OCI-LY7 (cell line): ENCODE measurements at regions of chr1 and their contacts with region 1.

Region 1: GRCh38 chr1:160997323-160998038 is 23.5 kb downstream of the F11R start:
- DNase-seq: peak; percentile 70
- H3K4me3 ChIP-seq: no peak overlapping the region
- H3K27ac ChIP-seq: no peak overlapping the region
- H3K4me1 ChIP-seq: peaks cover 11% of the 10 kb centered on the region
- CTCF ChIP-seq: peak; percentile 84

Region 2: GRCh38 chr1:160112357-160112756 is 885.1 kb before region 1 on chr1:
- CTCF ChIA-PET with region 1: interaction called, 14 read pairs
- POLR2A ChIA-PET with region 1: no interaction called
- intact Hi-C with region 1: no loop called
- DNase-seq: no peak
- H3K4me3 ChIP-seq: no peak overlapping the region
- H3K27ac ChIP-seq: no peak overlapping the region
- H3K4me1 ChIP-seq: peaks cover 4% of the 10 kb centered on the region
- CTCF ChIP-seq: no peak

Region 3: GRCh38 chr1:161038523-161039153 is 41.2 kb after region 1 on chr1 and contains the start of gene TSTD1:
- CTCF ChIA-PET with region 1: interaction called, 4 read pairs
- POLR2A ChIA-PET with region 1: no interaction called
- intact Hi-C with region 1: loop called (anchors 2 kb)
- DNase-seq: peak; percentile 87
- H3K4me3 ChIP-seq: peak within 1 kb of the TSS; percentile 81
- H3K27ac ChIP-seq: peak within 1 kb of the TSS; percentile 57
- H3K4me1 ChIP-seq: peaks cover 66% of the 10 kb centered on the region
- CTCF ChIP-seq: peak; percentile 35; the same call in 1 of the 2 replicates
- total RNA-seq, gene TSTD1: 164 and 206 TPM in 2 replicates

Region 4: GRCh38 chr1:161098210-161099068 is 101.0 kb after region 1 on chr1 and contains the start of gene KLHDC9:
- CTCF ChIA-PET with region 1: interaction called, 7 read pairs
- POLR2A ChIA-PET with region 1: no interaction called
- intact Hi-C with region 1: loop called (anchors 1 kb)
- DNase-seq: peak; percentile 86
- H3K4me3 ChIP-seq: peak within 1 kb of the TSS; percentile 65
- H3K27ac ChIP-seq: peak within 1 kb of the TSS; percentile 50
- H3K4me1 ChIP-seq: peaks cover 29% of the 10 kb centered on the region
- CTCF ChIP-seq: no peak
- total RNA-seq, gene KLHDC9: 0.95 and 2.7 TPM in 2 replicates

Region 5: DNA sequence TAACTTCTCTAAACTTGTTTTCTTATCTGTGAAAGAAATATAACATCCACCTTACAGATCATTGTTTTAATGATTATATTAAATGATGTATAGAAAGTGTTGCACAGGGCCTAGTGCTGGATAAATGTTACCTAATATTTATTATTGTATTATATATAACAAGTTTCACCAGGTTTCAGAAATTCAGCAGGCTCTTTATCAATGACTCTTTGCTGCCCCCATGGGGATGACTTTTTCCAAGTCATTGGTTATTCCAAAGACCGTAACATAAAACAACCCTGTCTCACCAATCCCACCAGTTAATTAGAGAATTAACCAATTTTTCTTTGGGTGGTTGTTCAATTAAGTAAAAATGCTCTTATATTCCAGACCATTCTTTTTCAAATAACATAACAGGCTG is 142.3 kb after region 1 on chr1:
- CTCF ChIA-PET with region 1: interaction called, 3 read pairs
- POLR2A ChIA-PET with region 1: no interaction called
- intact Hi-C with region 1: loop called (anchors 2 kb)
- DNase-seq: peak; percentile 52
- H3K4me3 ChIP-seq: no peak overlapping the region
- H3K27ac ChIP-seq: no peak overlapping the region
- H3K4me1 ChIP-seq: peaks cover 14% of the 10 kb centered on the region
- CTCF ChIP-seq: peak; percentile 85

Region 6: DNA sequence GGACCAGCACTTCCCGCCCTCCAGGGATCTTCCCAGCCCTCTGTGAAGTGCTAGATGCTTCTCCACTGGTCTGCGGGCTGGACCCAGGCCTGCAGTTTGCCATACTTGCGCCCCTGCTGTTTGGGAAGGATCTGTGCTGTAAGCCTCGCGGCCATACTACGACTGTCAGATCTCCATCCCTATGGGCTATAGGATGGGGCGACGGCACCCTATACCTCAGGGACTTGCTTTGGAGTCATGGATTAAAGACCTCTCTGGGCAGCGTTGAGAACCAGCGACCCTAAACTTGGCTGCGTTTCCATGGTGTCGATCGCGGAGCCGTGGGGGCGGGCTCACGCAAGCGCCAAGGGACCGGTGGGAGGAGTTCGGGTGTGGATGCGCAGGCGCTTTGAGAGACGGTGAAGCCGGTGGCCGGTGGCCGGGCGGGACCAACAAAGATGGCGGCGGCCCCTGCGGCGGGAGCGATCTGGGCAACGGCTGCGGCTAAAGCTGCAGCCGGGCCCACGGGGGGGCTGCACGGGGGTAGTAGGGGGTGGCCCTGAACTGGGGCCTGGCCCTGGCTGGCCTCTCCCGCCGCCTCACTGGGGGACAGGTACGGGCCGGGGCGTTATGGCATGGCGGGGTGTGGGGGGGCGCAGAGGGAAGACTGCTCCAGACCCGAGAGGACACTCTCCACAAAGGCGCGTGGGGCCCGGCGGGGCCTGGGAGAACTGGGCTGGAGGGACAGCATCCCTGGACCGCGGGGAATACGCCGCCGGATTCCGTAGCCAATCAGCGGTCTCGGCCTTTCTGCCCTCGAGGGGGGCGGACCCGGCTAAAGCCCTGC is 161.8 kb after region 1 on chr1 and contains the start of gene USP21:
- CTCF ChIA-PET with region 1: no interaction called
- POLR2A ChIA-PET with region 1: no interaction called
- intact Hi-C with region 1: loop called (anchors 5 kb)
- DNase-seq: peak; percentile 95
- H3K4me3 ChIP-seq: peak within 1 kb of the TSS; percentile 82
- H3K27ac ChIP-seq: peak within 1 kb of the TSS; percentile 38
- H3K4me1 ChIP-seq: peaks cover 25% of the 10 kb centered on the region
- CTCF ChIP-seq: peak; percentile 38; the same call in 1 of the 2 replicates
- total RNA-seq, gene USP21: 18.4 and 19.6 TPM in 2 replicates